Calu3 (cell line): ENCODE measurements at regions of chr5 and their contacts with region 1.

Region 1: GRCh38 chr5:55172051-55172899 is 702 bp downstream of the CDC20B start:
- DNase-seq: peak; percentile 58
- H3K4me3 Mint-ChIP-seq: peak overlapping the region; percentile 74
- H3K27ac Mint-ChIP-seq: no peak overlapping the region
- H3K4me1 Mint-ChIP-seq: peaks cover 22% of the 10 kb centered on the region
- H3K27me3 Mint-ChIP-seq: peaks cover 9% of the 10 kb centered on the region
- CTCF ChIP-seq: peak; percentile 51

Region 2: GRCh38 chr5:55218945-55219344 is 46.7 kb after region 1 on chr5:
- CTCF ChIA-PET with region 1: interaction called, 3 read pairs
- intact Hi-C with region 1: loop called (anchors 5 kb)
- DNase-seq: peak; percentile 87
- H3K4me3 Mint-ChIP-seq: peak overlapping the region; percentile 36
- H3K27ac Mint-ChIP-seq: peak overlapping the region; percentile 84
- H3K4me1 Mint-ChIP-seq: peaks cover 17% of the 10 kb centered on the region
- H3K27me3 Mint-ChIP-seq: no peaks in the 10 kb centered on the region
- CTCF ChIP-seq: no peak

Region 3: DNA sequence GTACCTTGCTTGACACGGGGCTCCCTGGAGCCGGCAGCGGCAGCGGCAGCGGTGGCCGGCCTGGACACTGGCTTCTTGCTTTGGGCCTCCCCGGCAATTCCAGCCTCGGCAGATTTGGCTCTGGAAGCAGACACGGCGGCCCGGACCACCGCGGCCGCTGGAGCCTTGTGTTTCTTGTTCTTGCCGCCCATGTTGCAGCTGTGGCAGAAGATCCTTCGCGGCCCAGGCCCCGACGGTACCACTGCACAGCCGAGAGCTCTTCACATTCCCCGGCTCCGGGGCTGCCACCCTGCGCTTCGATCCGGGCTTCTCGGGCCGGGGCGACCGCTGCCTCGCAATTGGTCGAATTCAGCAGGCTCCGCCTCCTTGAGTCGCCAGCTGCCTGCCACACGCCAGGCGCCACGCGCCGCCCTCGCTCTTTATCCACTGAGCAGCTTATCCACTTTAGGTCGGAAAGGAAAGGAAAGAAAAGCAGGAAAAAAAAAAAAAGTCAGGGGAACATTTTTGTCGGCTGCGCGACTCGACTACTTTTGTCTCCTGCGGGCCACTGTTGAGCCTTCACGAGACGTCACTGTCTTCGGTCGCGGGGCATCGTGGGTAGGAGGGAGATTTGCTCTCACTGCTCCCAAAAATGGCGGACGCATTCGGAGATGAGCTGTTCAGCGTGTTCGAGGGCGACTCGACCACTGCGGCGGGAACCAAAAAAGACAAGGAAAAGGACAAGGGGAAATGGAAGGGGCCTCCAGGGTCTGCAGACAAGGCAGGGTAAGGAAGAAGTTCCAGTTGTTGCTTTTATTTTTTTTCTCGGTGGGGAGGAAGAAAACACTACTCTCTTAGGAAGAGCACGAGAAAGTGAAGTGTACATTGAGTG is 135.3 kb after region 1 on chr5 and contains the starts of genes DHX29 and MTREX:
- CTCF ChIA-PET with region 1: interaction called, 3 read pairs
- intact Hi-C with region 1: loop called (anchors 5 kb)
- DNase-seq: peak; percentile 90
- H3K4me3 Mint-ChIP-seq: no peak within 1 kb of the TSS
- H3K27ac Mint-ChIP-seq: no peak within 1 kb of the TSS
- H3K4me1 Mint-ChIP-seq: peaks cover 22% of the 10 kb centered on the region
- H3K27me3 Mint-ChIP-seq: no peaks in the 10 kb centered on the region
- CTCF ChIP-seq: no peak
- total RNA-seq, gene DHX29: 17.2 and 20.1 TPM in 2 replicates
- total RNA-seq, gene MTREX: 73.9 and 79.0 TPM in 2 replicates

Region 4: DNA sequence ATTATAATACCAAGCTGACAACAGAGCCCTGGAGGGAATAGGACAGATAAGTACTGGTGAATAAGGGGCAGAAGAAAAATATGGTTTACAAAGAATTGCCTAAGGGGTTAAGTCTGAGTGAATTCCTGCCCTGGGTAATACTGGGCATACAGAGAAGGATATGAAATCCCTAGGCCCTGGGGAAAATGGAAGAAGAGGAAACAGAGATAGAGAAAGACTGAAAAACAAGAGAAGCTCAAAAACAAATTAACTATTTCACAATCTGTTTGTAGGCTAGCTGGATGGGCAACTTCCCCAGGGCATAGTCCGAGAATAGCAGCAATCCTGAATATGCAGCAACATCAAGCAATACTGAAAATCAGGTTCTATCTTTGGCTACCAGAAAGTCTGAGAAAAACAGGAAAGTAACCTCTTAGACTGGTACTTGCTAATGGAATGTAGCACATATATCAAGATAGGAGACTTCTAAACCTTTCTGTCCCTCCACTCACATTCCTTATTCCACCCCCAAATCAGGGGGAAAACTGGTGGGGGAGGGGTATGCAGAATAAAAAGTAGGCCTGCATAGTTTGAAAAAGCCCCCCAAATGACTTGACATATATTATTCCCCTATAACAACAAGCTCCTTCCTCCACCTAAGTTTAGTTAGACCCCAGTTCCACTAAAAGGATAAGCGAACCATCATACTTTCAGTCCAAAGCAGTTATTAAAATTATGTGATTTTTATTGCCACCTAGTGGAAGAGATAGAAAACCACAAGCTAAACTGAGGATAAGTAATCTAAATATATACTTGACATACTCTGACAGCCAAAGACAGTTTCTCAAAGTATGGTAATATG is 519.2 kb after region 1 on chr5:
- CTCF ChIA-PET with region 1: no interaction called
- intact Hi-C with region 1: loop called (anchors 2 kb)
- DNase-seq: no peak
- H3K4me3 Mint-ChIP-seq: no peak overlapping the region
- H3K27ac Mint-ChIP-seq: no peak overlapping the region
- H3K4me1 Mint-ChIP-seq: peaks cover 14% of the 10 kb centered on the region
- H3K27me3 Mint-ChIP-seq: no peaks in the 10 kb centered on the region
- CTCF ChIP-seq: peak; percentile 44